Panc1 (cell line): ENCODE measurements at regions of chr7 and their contacts with region 1.

Region 1: GRCh38 chr7:93365341-93365740 is 133.2 kb downstream of the VPS50 start:
- DNase-seq: no peak
- ATAC-seq: no peak
- H3K4me3 ChIP-seq: no peak overlapping the region
- H3K27ac ChIP-seq: no peak overlapping the region
- H3K4me1 ChIP-seq: no peaks in the 10 kb centered on the region
- H3K27me3 ChIP-seq: 0 out of 2 replicates have a peak, but pooled peaks cover 2% of the 10 kb centered on the region
- CTCF ChIP-seq: no peak

Region 2: DNA sequence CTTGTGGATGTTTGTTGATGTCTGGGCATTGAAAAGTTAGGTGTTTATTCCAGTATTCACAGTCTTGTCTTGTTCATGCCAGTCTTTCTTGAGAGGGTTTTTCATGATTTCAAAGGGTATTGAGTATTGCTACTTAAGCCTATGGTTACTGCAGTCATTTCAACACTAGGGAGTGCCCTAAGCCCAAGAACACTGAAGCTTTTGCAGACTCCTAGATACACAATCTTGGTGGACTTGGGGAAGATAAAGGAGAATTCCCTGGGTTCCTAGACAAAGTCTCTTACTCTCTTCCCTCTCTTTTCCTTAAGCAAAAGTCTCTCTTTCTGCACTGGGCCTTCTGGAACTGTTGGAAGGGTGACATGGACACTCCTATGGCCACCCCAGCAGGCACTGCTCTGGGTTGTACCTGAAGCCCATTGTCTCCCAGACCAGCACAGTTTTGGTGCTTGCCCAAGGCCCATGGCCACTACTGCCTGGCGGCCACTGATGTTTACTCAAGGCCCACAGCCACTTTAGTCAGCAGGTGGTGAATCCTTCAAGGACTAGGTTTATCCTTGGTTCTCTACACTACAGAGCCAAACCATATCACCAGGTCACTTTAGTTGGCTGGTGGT is 272.5 kb before region 1 on chr7:
- CTCF ChIA-PET with region 1: no interaction called
- POLR2A ChIA-PET with region 1: interaction called, 13 read pairs
- in situ Hi-C with region 1: no loop called
- intact Hi-C with region 1: no loop called
- DNase-seq: peak; percentile 25
- ATAC-seq: peak; percentile 84
- H3K4me3 ChIP-seq: no peak overlapping the region
- H3K27ac ChIP-seq: no peak overlapping the region
- H3K4me1 ChIP-seq: no peaks in the 10 kb centered on the region
- H3K27me3 ChIP-seq: peaks cover 3% of the 10 kb centered on the region; the same call in 1 of the 2 replicates
- CTCF ChIP-seq: peak; percentile 35; the same call in 1 of the 2 replicates

Region 3: GRCh38 chr7:93146472-93147141 is 218.7 kb before region 1 on chr7:
- CTCF ChIA-PET with region 1: no interaction called
- POLR2A ChIA-PET with region 1: no interaction called
- in situ Hi-C with region 1: no loop called
- intact Hi-C with region 1: no loop called
- DNase-seq: no peak
- ATAC-seq: no peak
- H3K4me3 ChIP-seq: no peak overlapping the region; a peak in 1 of 4 replicates
- H3K27ac ChIP-seq: no peak overlapping the region
- H3K4me1 ChIP-seq: no peaks in the 10 kb centered on the region; the same call in 1 of the 2 replicates
- H3K27me3 ChIP-seq: no peaks in the 10 kb centered on the region
- CTCF ChIP-seq: no peak